Motor neuron (in vitro differentiated cells): ENCODE measurements at regions of chr9 and their contacts with region 1.

Region 1: GRCh38 chr9:69877854-69878514 is 57.4 kb downstream of the CFAP95 start:
- ATAC-seq: peak in 3 of 8 experiments; percentile 85 to 93 (median 92)
- H3K4me3 ChIP-seq: no peak overlapping the region
- H3K27ac ChIP-seq: no peak overlapping the region
- H3K4me1 ChIP-seq: peaks cover 10% of the 10 kb centered on the region in 2 donors

Region 2: DNA sequence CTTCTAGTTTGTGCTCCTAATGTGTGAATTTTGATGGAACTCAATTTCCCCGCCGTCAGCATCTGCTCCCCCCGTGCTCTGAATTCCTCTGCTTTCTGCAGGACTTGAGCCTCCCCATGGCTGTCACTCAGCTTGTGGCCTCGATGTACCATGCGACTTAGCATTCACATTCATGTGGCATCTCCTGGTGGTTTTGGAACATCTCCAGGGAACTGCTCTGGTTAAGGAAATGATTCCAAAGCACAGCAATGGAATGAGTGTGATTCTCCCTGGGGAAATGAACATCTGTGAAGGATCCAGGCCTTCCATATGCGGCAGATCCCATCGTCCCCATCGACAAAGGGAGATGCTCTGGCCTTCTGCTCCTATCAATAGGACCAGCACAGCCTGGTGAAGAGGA is 434.0 kb before region 1 on chr9:
- in situ Hi-C with region 1: loop called in 1 of 9 experiments (anchors 25 kb)
- ATAC-seq: peak in 1 of 8 experiments; percentile 22
- H3K4me3 ChIP-seq: no peak overlapping the region
- H3K27ac ChIP-seq: no peak overlapping the region
- H3K4me1 ChIP-seq: peaks cover 0 to 5% of the 10 kb centered on the region in 2 donors